PC-9 (cell line): ENCODE measurements at regions of chr15 and their contacts with region 1.

Region 1: GRCh38 chr15:57751177-57751800 is 44.8 kb downstream of the POLR2M start:
- DNase-seq: no peak
- H3K4me3 ChIP-seq: no peak overlapping the region
- H3K27ac ChIP-seq: no peak overlapping the region
- H3K4me1 ChIP-seq: no peaks in the 10 kb centered on the region
- H3K27me3 ChIP-seq: no peaks in the 10 kb centered on the region
- CTCF ChIP-seq: peak; percentile 56

Region 2: DNA sequence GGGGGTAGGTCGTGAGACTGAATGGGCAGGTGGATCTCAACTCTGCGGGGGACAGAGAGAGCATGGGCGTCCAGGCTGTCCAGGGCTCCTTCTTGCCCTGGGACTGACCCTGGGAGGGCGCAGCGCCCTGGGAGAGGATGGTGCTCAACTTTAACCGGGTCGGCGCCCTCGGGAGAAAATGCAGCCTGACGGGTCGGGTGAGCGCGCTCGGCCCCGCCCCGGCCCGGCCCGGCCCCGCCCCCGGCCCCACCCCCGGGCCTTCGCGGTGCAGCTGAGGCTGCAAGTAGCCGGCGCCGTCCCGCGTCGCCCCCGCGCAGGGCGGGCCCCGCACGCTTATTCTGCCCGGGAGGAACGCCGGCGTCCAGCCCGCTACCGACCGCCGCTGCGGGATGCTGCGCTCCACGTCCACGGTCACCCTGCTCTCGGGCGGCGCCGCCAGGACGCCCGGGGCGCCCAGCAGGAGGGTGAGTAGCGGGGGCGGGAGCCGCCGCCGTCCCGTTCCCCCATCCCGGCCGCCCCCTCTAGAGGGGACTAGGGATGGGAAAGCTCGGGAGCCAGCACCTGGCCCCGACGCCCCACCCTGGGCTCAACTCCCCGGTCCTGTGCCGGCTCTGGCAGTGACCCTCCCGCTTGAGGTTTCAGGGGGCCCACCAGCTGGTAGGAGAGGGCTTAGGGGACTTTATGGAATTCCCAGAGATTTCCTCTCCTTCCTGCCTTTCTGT is 159.5 kb before region 1 on chr15 and contains the start of gene MYZAP:
- CTCF ChIA-PET with region 1: no interaction called
- POLR2A ChIA-PET with region 1: no interaction called
- intact Hi-C with region 1: no loop called
- DNase-seq: peak; percentile 48 to 80
- H3K4me3 ChIP-seq: peak within 1 kb of the TSS; percentile 78
- H3K27ac ChIP-seq: peak within 1 kb of the TSS; percentile 90
- H3K4me1 ChIP-seq: peaks cover 72% of the 10 kb centered on the region
- H3K27me3 ChIP-seq: no peaks in the 10 kb centered on the region
- CTCF ChIP-seq: no peak
- total RNA-seq, gene MYZAP: 3.5 and 5.9 TPM in 2 replicates

Region 3: DNA sequence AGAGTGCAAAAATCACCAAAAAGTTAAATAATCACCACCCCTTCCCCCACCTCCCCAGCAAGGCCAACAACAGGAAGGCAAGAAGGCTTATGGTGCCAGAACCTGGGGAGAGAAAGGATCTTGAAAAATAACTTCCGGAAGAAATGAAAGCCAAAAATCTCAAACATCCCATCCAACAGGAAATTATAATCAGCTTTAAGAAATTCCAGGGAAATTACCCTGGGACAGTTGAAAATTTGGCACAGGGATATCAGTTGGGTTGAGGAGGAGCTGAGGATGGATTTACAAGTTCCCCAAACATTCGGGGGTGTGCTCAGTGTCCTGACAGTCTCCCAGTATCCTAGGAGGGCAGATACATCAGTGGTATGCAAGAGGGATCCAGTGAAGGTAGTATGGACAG is 37.9 kb after region 1 on chr15:
- CTCF ChIA-PET with region 1: interaction called, 11 read pairs
- POLR2A ChIA-PET with region 1: no interaction called
- intact Hi-C with region 1: no loop called
- DNase-seq: no peak
- H3K4me3 ChIP-seq: no peak overlapping the region
- H3K27ac ChIP-seq: no peak overlapping the region
- H3K4me1 ChIP-seq: no peaks in the 10 kb centered on the region
- H3K27me3 ChIP-seq: no peaks in the 10 kb centered on the region
- CTCF ChIP-seq: no peak